Caco-2 (cell line): ENCODE measurements at regions of chrX and their contacts with region 1.

Region 1: GRCh38 chrX:54439967-54440871 is at the start of gene TSR2:
- DNase-seq: peak; percentile 80 to 83
- H3K4me3 ChIP-seq: peak within 1 kb of the TSS; percentile 55
- H3K4me3 Mint-ChIP-seq: peak within 1 kb of the TSS; percentile 95
- H3K27ac Mint-ChIP-seq: peak within 1 kb of the TSS; percentile 90
- H3K4me1 ChIP-seq: no peaks in the 10 kb centered on the region
- H3K4me1 Mint-ChIP-seq: peaks cover 6% of the 10 kb centered on the region
- H3K27me3 ChIP-seq: no peaks in the 10 kb centered on the region
- H3K27me3 Mint-ChIP-seq: no peaks in the 10 kb centered on the region
- CTCF ChIP-seq: no peak
- total RNA-seq, gene TSR2: 42.4 and 45.7 TPM in 2 replicates

Region 2: DNA sequence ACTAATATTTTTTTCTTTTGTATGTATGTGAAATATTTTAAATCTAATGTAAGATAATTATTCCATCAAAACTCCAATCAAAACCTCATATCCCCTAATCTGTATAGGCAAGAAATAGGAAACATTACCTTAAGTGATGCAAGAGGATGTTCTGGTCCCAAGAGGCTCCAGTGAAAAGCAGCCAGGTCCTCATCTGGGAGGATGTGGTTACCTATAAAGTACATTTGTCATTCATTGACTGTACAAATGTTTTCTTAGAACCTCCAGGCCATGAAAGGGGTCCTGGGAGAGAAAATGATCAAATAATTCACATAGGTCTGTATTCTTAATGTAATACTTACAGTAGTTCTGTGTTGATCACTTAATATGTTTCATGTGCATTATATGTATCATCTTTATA is 282.7 kb before region 1 on chrX:
- CTCF ChIA-PET with region 1: no interaction called
- POLR2A ChIA-PET with region 1: no interaction called
- intact Hi-C with region 1: no loop called
- DNase-seq: no peak
- H3K4me3 ChIP-seq: no peak overlapping the region
- H3K4me3 Mint-ChIP-seq: no peak overlapping the region
- H3K27ac Mint-ChIP-seq: no peak overlapping the region
- H3K4me1 ChIP-seq: no peaks in the 10 kb centered on the region
- H3K4me1 Mint-ChIP-seq: no peaks in the 10 kb centered on the region
- H3K27me3 ChIP-seq: no peaks in the 10 kb centered on the region
- H3K27me3 Mint-ChIP-seq: no peaks in the 10 kb centered on the region
- CTCF ChIP-seq: no peak

Region 3: GRCh38 chrX:54248309-54248708 is 191.9 kb before region 1 on chrX:
- CTCF ChIA-PET with region 1: no interaction called
- POLR2A ChIA-PET with region 1: no interaction called
- intact Hi-C with region 1: loop called (anchors 1 kb)
- DNase-seq: peak in 1 of 2 experiments; percentile 6
- H3K4me3 ChIP-seq: no peak overlapping the region
- H3K4me3 Mint-ChIP-seq: no peak overlapping the region
- H3K27ac Mint-ChIP-seq: no peak overlapping the region
- H3K4me1 ChIP-seq: no peaks in the 10 kb centered on the region
- H3K4me1 Mint-ChIP-seq: no peaks in the 10 kb centered on the region
- H3K27me3 ChIP-seq: no peaks in the 10 kb centered on the region
- H3K27me3 Mint-ChIP-seq: peaks cover 2% of the 10 kb centered on the region
- CTCF ChIP-seq: peak in 1 of 2 experiments; percentile 33

Region 4: GRCh38 chrX:54529552-54530357 is 89.5 kb after region 1 on chrX and contains the start of gene GNL3L:
- CTCF ChIA-PET with region 1: no interaction called
- POLR2A ChIA-PET with region 1: interaction called, 10 read pairs
- intact Hi-C with region 1: no loop called
- DNase-seq: peak; percentile 83 to 89
- H3K4me3 ChIP-seq: peak within 1 kb of the TSS; percentile 64
- H3K4me3 Mint-ChIP-seq: peak within 1 kb of the TSS; percentile 83
- H3K27ac Mint-ChIP-seq: peak within 1 kb of the TSS; percentile 95
- H3K4me1 ChIP-seq: no peaks in the 10 kb centered on the region
- H3K4me1 Mint-ChIP-seq: peaks cover 7% of the 10 kb centered on the region
- H3K27me3 ChIP-seq: no peaks in the 10 kb centered on the region
- H3K27me3 Mint-ChIP-seq: no peaks in the 10 kb centered on the region
- CTCF ChIP-seq: no peak
- total RNA-seq, gene GNL3L: 61.0 and 64.3 TPM in 2 replicates